Naive thymus-derived CD4-positive, alpha-beta T cell (primary cell): ENCODE measurements at regions of chr9 and their contacts with region 1.

Region 1: DNA sequence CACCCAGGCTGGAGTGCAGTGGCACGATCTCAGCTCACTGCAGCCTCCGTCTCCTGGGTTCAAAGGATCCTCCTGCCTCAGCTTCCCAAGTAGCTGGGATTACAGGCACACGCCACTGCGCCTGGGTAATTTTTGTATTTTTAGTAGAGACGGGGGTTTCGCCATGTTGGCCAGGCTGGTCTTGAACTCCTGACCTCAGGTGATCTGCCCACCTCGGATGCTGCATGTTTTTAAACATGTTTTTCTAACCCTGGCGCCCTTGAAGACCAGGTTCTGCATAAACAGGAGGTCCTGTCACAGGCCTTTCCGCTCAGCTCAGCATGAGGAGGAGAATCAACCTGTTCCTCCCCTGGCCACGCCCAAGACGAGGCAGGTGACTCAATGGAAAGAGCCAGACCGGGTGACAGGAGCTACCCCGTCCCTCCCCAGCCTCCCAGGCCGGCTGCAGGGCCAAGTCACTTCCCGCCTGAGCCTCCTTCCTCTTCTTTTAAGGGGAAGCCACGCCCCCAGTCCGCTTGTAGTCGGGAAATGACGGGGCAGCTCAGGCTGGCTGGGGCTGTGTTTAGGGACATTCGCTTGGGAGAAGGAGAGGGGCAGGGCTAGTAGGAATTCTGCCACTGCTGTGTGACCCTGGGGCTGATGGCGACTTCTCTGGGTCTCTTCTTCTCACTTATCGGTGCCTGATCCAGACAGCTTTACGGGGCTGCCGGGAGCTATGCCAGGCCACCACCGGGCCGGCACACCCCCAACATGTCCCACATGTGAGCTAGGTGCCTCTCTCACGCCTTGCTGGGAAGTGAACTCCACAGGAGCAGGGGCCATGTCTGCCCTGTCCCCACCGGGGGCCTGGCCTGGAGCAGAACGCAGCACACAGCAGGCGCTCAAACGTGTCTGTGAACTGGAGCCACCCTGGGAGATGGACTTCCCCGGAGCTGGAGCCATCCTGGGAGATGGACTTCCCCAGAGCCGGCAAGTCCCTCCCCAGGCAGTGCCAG is 6.1 kb downstream of the NOTCH1 start:
- DNase-seq: peak; percentile 50 to 92 (median 80)
- ATAC-seq: peak; percentile 79
- H3K4me3 ChIP-seq: peak overlapping the region; percentile 65
- H3K4me3 Mint-ChIP-seq: peak overlapping the region; percentile 78 to 97 (median 85)
- H3K27ac ChIP-seq: peak overlapping the region; percentile 80
- H3K27ac Mint-ChIP-seq: peak overlapping the region; percentile 90 to 99 (median 99)
- H3K4me1 ChIP-seq: peaks cover 61 to 70% of the 10 kb centered on the region in 2 donors
- H3K4me1 Mint-ChIP-seq: peaks cover 24 to 73% (median 48%) of the 10 kb centered on the region in 7 donors
- H3K27me3 ChIP-seq: no peaks in the 10 kb centered on the region
- H3K27me3 Mint-ChIP-seq: no peaks in the 10 kb centered on the region

Region 2: DNA sequence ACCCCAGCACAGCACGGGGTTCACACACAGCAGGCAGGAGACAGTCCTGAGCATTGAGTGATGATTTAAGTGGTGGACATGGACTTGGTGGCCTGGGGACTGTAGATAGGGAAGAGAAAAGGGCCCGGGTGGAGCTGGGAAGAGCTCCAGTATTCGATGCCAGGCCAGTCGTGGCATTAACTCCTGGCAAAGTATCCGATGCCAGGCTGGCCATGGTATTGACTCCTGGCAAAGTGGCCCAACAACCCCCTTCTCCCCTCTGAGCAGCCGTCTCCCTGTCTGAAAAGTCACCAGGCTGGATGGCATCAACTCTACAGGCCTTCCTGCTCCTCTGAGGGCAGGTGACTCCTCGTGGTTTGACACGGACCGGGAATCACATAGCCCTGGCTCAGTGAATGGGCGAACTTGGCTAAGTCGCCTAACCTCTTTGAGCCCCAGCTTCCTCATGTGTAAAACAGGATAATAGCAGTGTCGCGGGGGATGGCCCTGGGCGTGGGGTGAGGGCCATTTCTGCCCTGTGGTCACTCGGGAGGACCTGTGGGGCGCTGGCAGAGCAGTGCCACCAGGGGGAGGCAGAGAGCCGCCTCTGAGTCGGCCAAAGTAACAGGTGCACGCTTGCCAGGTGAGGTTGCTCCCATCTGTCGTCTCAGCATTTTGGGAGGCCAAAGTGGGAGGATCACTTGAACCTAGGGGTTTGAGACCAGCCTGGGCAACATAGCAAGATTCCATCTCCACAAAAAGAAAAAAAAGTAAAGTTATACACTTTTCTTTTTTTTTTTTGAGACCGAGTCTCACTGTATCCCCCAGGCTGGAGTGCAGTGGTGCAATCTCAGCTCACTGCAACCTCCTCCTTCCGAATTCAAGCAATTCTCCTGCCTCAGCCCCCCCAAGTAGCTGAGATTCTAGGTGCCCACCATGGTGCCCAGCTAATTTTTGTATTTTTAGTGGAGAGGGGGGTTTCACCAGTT is 51.2 kb before region 1 on chr9:
- CTCF ChIA-PET with region 1: interaction called, 17 read pairs
- POLR2A ChIA-PET with region 1: interaction called, 6 read pairs
- intact Hi-C with region 1: loop called (anchors 1 kb)
- DNase-seq: peak; percentile 54 to 85 (median 73)
- ATAC-seq: peak; percentile 59
- H3K4me3 ChIP-seq: no peak overlapping the region
- H3K4me3 Mint-ChIP-seq: peak overlapping the region in 1 of 10 donors; percentile 47
- H3K27ac ChIP-seq: no peak overlapping the region
- H3K27ac Mint-ChIP-seq: no peak overlapping the region
- H3K4me1 ChIP-seq: peaks cover 3 to 10% of the 10 kb centered on the region in 2 donors
- H3K4me1 Mint-ChIP-seq: peaks cover 3 to 8% (median 5%) of the 10 kb centered on the region in 7 donors
- H3K27me3 ChIP-seq: no peaks in the 10 kb centered on the region
- H3K27me3 Mint-ChIP-seq: no peaks in the 10 kb centered on the region

Region 3: DNA sequence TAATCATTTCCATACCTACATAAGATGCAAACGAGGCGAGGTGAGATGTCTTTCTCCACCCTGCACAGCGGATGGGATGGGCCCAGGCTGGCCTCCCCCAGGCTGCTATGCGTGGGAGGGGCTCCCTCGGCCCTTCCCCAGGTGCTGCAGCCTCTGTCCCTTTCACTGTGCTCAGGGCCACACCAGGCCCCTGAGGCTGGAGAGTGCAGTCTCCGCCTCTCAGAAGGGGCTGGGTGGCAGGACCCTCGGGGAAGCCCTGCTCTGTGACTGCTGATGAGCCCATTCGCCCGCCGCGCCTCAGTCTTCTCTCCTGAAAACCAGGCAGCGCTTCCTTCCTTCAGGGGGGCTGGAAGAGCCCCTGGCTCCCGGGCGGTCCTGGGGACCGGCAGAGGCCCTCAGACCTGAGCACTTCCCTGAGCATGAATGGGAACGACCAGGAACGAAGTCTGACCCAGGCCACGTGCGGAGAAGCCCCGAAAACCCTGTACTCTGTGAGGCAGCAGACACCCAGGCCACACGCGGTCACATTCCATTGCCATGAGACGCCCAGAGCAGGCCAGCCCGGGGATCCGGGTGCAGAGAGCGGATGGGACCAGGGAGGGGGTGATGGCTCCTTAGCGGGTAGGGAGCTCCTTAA is 28.0 kb after region 1 on chr9:
- CTCF ChIA-PET with region 1: no interaction called
- POLR2A ChIA-PET with region 1: no interaction called
- intact Hi-C with region 1: no loop called
- DNase-seq: no peak
- ATAC-seq: no peak
- H3K4me3 ChIP-seq: no peak overlapping the region
- H3K4me3 Mint-ChIP-seq: no peak overlapping the region
- H3K27ac ChIP-seq: no peak overlapping the region
- H3K27ac Mint-ChIP-seq: no peak overlapping the region
- H3K4me1 ChIP-seq: no peaks in the 10 kb centered on the region
- H3K4me1 Mint-ChIP-seq: peaks cover 0 to 10% (median 0%) of the 10 kb centered on the region in 7 donors
- H3K27me3 ChIP-seq: no peaks in the 10 kb centered on the region
- H3K27me3 Mint-ChIP-seq: no peaks in the 10 kb centered on the region

Region 4: GRCh38 chr9:136578915-136579649 is 39.4 kb after region 1 on chr9:
- CTCF ChIA-PET with region 1: no interaction called
- POLR2A ChIA-PET with region 1: no interaction called
- intact Hi-C with region 1: loop called in 1 of 2 experiments (anchors 5 kb)
- DNase-seq: peak in 4 of 9 donors; percentile 23 to 47 (median 32)
- ATAC-seq: peak; percentile 64
- H3K4me3 ChIP-seq: no peak overlapping the region
- H3K4me3 Mint-ChIP-seq: no peak overlapping the region
- H3K27ac ChIP-seq: no peak overlapping the region
- H3K27ac Mint-ChIP-seq: peak overlapping the region in 2 of 9 donors; percentile 19 to 91
- H3K4me1 ChIP-seq: no peaks in the 10 kb centered on the region
- H3K4me1 Mint-ChIP-seq: peaks cover 6 to 9% (median 8%) of the 10 kb centered on the region in 7 donors
- H3K27me3 ChIP-seq: no peaks in the 10 kb centered on the region
- H3K27me3 Mint-ChIP-seq: no peaks in the 10 kb centered on the region